CD8-positive, alpha-beta T cell (primary cell): ENCODE measurements at regions of chr1 and their contacts with region 1.

Region 1: GRCh38 chr1:28668191-28668955 is at the start of gene GMEB1:
- DNase-seq: peak; percentile 66 to 91 (median 82)
- ATAC-seq: peak; percentile 61
- H3K4me3 ChIP-seq: peak within 1 kb of the TSS; percentile 83 to 98
- H3K4me3 Mint-ChIP-seq: peak within 1 kb of the TSS; percentile 92
- H3K27ac ChIP-seq: peak within 1 kb of the TSS; percentile 81 to 98
- H3K27ac Mint-ChIP-seq: peak within 1 kb of the TSS; percentile 97
- H3K4me1 ChIP-seq: peaks cover 9% of the 10 kb centered on the region
- H3K4me1 Mint-ChIP-seq: peaks cover 22% of the 10 kb centered on the region
- H3K27me3 ChIP-seq: no peaks in the 10 kb centered on the region
- H3K27me3 Mint-ChIP-seq: no peaks in the 10 kb centered on the region
- CTCF ChIP-seq: no peak
- total RNA-seq, gene GMEB1: 12.9 to 13.6 TPM

Region 2: DNA sequence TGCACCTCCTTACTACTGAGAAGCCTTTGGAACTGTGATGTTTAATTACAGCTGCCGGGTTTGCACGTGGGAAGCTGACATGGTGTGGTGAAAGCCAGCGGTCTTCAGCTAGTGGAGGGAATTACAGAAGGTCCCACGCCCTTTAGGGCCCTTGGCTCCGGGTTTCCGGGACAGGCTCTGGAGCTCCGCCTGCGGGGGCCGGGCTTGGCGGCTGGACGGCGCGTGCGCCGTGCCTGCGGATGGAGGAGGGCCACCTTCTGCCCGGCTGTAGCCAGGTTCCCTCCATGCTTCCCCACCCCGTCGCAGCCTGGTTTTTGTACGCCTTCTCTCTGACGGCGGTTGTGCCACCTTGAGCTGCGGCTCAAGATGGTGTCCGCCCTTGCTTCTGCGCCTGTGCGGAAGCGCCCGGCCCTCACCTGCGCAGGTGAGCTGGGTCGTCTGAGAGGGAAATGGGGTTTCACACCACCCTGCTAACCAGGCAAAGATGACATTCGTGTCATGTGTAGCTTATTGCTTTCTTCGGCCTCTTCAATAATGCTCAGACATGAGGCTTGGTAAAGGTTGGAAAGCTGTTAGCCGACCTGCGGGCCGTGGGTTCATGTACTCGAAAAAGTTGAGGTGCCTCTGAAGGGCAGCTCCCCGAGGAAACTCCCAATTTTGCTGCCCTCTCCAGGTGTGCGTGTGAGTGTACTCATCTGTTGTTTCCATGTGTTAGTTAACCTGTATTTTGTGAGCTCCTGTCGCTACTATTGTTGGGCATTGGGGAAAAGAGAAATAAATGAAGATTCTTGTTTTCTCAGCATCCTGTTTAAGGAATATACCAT is 107.0 kb after region 1 on chr1:
- CTCF ChIA-PET with region 1: no interaction called
- POLR2A ChIA-PET with region 1: interaction called, 10 read pairs
- intact Hi-C with region 1: no loop called
- DNase-seq: peak; percentile 47 to 86 (median 69)
- ATAC-seq: peak; percentile 92
- H3K4me3 ChIP-seq: peak overlapping the region; percentile 48 to 56
- H3K4me3 Mint-ChIP-seq: peak overlapping the region; percentile 82
- H3K27ac ChIP-seq: peak overlapping the region; percentile 54 to 58
- H3K27ac Mint-ChIP-seq: peak overlapping the region; percentile 91
- H3K4me1 ChIP-seq: peaks cover 13% of the 10 kb centered on the region
- H3K4me1 Mint-ChIP-seq: peaks cover 12% of the 10 kb centered on the region
- H3K27me3 ChIP-seq: no peaks in the 10 kb centered on the region
- H3K27me3 Mint-ChIP-seq: no peaks in the 10 kb centered on the region
- CTCF ChIP-seq: no peak